RWPE1 (cell line): ENCODE measurements at regions of chr6 and their contacts with region 1.

Region 1: GRCh38 chr6:46788791-46789190 is 4.4 kb upstream of the MEP1A start:
- DNase-seq: no peak
- H3K27ac ChIP-seq: no peak overlapping the region
- CTCF ChIP-seq: no peak

Region 2: DNA sequence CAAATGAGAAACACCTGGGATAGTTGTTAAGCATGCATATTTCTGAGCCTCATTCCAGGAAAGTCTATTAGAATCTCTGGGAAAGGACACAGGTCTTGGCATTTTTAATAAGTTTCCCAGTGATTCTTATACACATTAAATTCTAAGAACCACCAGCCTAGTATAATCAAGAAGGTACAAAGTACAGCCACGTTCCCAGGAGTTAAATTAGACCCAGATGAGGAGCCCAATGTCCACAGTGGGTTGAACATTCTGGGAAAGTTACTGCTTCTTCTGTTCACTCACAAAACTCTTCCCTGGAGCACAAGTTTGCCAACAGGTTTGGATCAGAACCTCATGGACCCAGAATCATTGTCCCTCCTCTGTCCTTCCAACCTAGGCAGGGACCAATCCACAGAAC is 387.9 kb before region 1 on chr6:
- CTCF ChIA-PET with region 1: no interaction called
- POLR2A ChIA-PET with region 1: no interaction called
- DNase-seq: no peak
- H3K27ac ChIP-seq: no peak overlapping the region
- CTCF ChIP-seq: no peak

Region 3: GRCh38 chr6:47379328-47379727 is 590.5 kb after region 1 on chr6:
- CTCF ChIA-PET with region 1: interaction called, 10 read pairs
- POLR2A ChIA-PET with region 1: no interaction called
- DNase-seq: no peak
- H3K27ac ChIP-seq: no peak overlapping the region
- CTCF ChIP-seq: no peak